Activated B cell treated with CpG ODN at 0.5 μM for 24 hours (primary cell): ENCODE measurements at regions of chr1 and their contacts with region 1.

Region 1: GRCh38 chr1:234772345-234773147 is 162.6 kb upstream of the IRF2BP2 start:
- DNase-seq: peak; percentile 66
- ATAC-seq: peak; percentile 81
- H3K4me3 Mint-ChIP-seq: peak overlapping the region; percentile 77
- H3K27ac Mint-ChIP-seq: peak overlapping the region; percentile 96
- H3K4me1 Mint-ChIP-seq: peaks cover 57% of the 10 kb centered on the region
- H3K27me3 Mint-ChIP-seq: no peaks in the 10 kb centered on the region
- CTCF ChIP-seq: no peak

Region 2: DNA sequence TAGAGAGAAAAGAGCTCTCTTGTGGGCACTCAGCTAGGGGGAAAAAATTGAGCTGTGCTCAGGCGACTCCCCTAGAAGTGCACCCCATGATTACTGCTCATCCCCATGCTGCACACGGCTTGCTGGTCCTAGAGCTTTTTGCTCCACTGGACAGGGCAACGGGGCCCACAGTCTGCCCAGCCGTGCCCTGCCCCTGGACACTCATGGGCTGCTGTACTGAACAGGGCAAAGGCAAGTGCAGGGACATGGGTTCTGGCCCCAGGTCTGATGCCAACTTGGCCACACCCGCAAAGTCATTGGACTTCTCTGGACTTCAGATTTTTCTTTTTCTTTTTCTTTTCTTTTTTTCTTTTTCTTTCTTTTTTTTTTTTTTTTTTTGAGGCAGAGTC is 250.7 kb before region 1 on chr1:
- CTCF ChIA-PET with region 1: no interaction called
- POLR2A ChIA-PET with region 1: interaction called, 4 read pairs
- intact Hi-C with region 1: loop called (anchors 1 kb)
- DNase-seq: no peak
- ATAC-seq: no peak
- H3K4me3 Mint-ChIP-seq: no peak overlapping the region
- H3K27ac Mint-ChIP-seq: no peak overlapping the region
- H3K4me1 Mint-ChIP-seq: peaks cover 38% of the 10 kb centered on the region
- H3K27me3 Mint-ChIP-seq: no peaks in the 10 kb centered on the region
- CTCF ChIP-seq: no peak

Region 3: GRCh38 chr1:234730770-234731568 is 41.6 kb before region 1 on chr1:
- CTCF ChIA-PET with region 1: no interaction called
- POLR2A ChIA-PET with region 1: interaction called, 13 read pairs
- intact Hi-C with region 1: loop called (anchors 1 kb)
- DNase-seq: peak; percentile 37
- ATAC-seq: peak; percentile 81
- H3K4me3 Mint-ChIP-seq: peak overlapping the region; percentile 44
- H3K27ac Mint-ChIP-seq: peak overlapping the region; percentile 79
- H3K4me1 Mint-ChIP-seq: peaks cover 46% of the 10 kb centered on the region
- H3K27me3 Mint-ChIP-seq: no peaks in the 10 kb centered on the region
- CTCF ChIP-seq: no peak

Region 4: GRCh38 chr1:234925440-234926263 is 153.1 kb after region 1 on chr1:
- CTCF ChIA-PET with region 1: interaction called, 3 read pairs
- POLR2A ChIA-PET with region 1: interaction called, 7 read pairs
- intact Hi-C with region 1: loop called (anchors 5 kb)
- DNase-seq: no peak
- ATAC-seq: no peak
- H3K4me3 Mint-ChIP-seq: peak overlapping the region; percentile 78
- H3K27ac Mint-ChIP-seq: peak overlapping the region; percentile 78
- H3K4me1 Mint-ChIP-seq: peaks cover 30% of the 10 kb centered on the region
- H3K27me3 Mint-ChIP-seq: no peaks in the 10 kb centered on the region
- CTCF ChIP-seq: no peak

Region 5: GRCh38 chr1:234978397-234979295 is 206.1 kb after region 1 on chr1:
- CTCF ChIA-PET with region 1: interaction called, 5 read pairs
- POLR2A ChIA-PET with region 1: interaction called, 39 read pairs
- intact Hi-C with region 1: loop called (anchors 1 kb)
- DNase-seq: peak; percentile 68
- ATAC-seq: peak; percentile 58
- H3K4me3 Mint-ChIP-seq: peak overlapping the region; percentile 77
- H3K27ac Mint-ChIP-seq: peak overlapping the region; percentile 93
- H3K4me1 Mint-ChIP-seq: peaks cover 74% of the 10 kb centered on the region
- H3K27me3 Mint-ChIP-seq: no peaks in the 10 kb centered on the region
- CTCF ChIP-seq: no peak

Region 6: GRCh38 chr1:235075188-235075926 is 302.8 kb after region 1 on chr1:
- CTCF ChIA-PET with region 1: no interaction called
- POLR2A ChIA-PET with region 1: interaction called, 4 read pairs
- intact Hi-C with region 1: loop called (anchors 2 kb)
- DNase-seq: peak; percentile 54
- ATAC-seq: peak; percentile 76
- H3K4me3 Mint-ChIP-seq: peak overlapping the region; percentile 75
- H3K27ac Mint-ChIP-seq: peak overlapping the region; percentile 95
- H3K4me1 Mint-ChIP-seq: peaks cover 37% of the 10 kb centered on the region
- H3K27me3 Mint-ChIP-seq: no peaks in the 10 kb centered on the region
- CTCF ChIP-seq: no peak

Region 7: DNA sequence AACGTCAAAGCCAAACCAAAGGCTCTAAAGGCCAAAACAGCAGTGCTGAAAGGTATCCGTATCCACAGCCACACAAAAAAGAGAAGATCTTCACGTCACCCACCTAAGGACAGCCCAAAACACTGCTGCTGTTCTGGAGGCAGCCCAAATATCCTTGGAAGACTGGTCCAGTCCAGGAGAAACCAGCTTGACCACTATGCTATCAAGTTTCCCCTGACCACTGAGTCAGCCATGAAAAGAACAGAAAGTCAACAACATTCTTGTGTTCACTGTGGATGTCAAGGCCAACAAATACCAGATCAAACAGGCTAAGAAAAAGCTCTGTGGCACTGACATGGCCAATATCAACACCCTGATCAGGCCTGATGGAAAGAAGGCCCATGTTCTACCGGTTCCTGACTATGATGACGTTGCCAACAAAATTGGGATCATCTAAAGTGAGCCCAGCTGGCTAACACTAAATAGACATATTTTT is 523.4 kb after region 1 on chr1:
- CTCF ChIA-PET with region 1: no interaction called
- POLR2A ChIA-PET with region 1: no interaction called
- intact Hi-C with region 1: no loop called
- DNase-seq: no peak
- ATAC-seq: no peak
- H3K4me3 Mint-ChIP-seq: no peak overlapping the region
- H3K27ac Mint-ChIP-seq: peak overlapping the region; percentile 50
- H3K4me1 Mint-ChIP-seq: peaks cover 63% of the 10 kb centered on the region
- H3K27me3 Mint-ChIP-seq: no peaks in the 10 kb centered on the region
- CTCF ChIP-seq: no peak